Activated B cell treated with CpG ODN at 0.5 μM for 24 hours (primary cell): ENCODE measurements at regions of chr2 and their contacts with region 1.

Region 1: GRCh38 chr2:64865073-64865830 is 123.9 kb upstream of the SLC1A4 start:
- DNase-seq: peak; percentile 76
- ATAC-seq: peak; percentile 56
- H3K4me3 Mint-ChIP-seq: peak overlapping the region; percentile 41
- H3K27ac Mint-ChIP-seq: no peak overlapping the region
- H3K4me1 Mint-ChIP-seq: peaks cover 6% of the 10 kb centered on the region
- H3K27me3 Mint-ChIP-seq: no peaks in the 10 kb centered on the region
- CTCF ChIP-seq: no peak

Region 2: GRCh38 chr2:64447317-64448040 is 417.8 kb before region 1 on chr2:
- CTCF ChIA-PET with region 1: no interaction called
- POLR2A ChIA-PET with region 1: no interaction called
- intact Hi-C with region 1: no loop called
- DNase-seq: no peak
- ATAC-seq: no peak
- H3K4me3 Mint-ChIP-seq: no peak overlapping the region
- H3K27ac Mint-ChIP-seq: no peak overlapping the region
- H3K4me1 Mint-ChIP-seq: no peaks in the 10 kb centered on the region
- H3K27me3 Mint-ChIP-seq: peaks cover 2% of the 10 kb centered on the region
- CTCF ChIP-seq: no peak

Region 3: DNA sequence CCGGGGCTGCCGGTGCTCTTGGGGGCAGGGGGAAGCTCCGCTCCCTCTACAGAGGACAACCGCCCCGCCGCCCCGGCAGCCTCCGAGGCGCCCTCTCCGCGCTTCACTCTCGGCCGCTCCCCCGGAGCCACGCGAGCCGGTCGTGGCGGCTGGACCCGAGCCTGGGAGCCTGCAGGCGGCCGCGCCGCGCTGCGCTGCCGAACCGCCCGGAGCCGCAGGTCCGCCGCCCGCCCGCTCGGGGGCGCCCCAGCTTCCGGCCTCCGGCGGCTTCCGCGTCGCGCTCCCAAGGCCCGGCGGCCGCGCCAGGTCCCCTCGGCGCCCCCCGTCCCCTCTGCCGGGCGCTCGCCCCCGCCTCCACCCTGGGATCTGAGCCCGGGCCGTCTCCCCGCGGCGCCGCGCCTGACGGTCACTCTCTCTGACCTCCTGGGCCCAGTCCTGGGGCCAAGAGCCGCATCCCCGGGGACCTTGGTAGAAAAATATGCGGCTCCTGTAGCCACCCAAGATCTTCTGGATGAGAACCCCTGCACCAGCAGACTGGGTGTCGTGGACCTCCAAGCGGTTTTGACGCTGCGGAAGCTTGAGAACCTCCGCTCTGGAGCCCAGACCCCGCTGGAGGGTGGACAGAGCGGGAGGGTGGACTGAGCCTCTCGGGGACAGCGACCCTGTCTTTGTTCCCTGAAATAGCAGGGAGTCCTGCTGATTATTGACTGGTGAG is 255.9 kb before region 1 on chr2:
- CTCF ChIA-PET with region 1: interaction called, 4 read pairs
- POLR2A ChIA-PET with region 1: interaction called, 18 read pairs
- intact Hi-C with region 1: loop called (anchors 1 kb)
- DNase-seq: peak; percentile 82
- ATAC-seq: peak; percentile 71
- H3K4me3 Mint-ChIP-seq: peak overlapping the region; percentile 84
- H3K27ac Mint-ChIP-seq: peak overlapping the region; percentile 77
- H3K4me1 Mint-ChIP-seq: peaks cover 34% of the 10 kb centered on the region
- H3K27me3 Mint-ChIP-seq: no peaks in the 10 kb centered on the region
- CTCF ChIP-seq: no peak

Region 4: DNA sequence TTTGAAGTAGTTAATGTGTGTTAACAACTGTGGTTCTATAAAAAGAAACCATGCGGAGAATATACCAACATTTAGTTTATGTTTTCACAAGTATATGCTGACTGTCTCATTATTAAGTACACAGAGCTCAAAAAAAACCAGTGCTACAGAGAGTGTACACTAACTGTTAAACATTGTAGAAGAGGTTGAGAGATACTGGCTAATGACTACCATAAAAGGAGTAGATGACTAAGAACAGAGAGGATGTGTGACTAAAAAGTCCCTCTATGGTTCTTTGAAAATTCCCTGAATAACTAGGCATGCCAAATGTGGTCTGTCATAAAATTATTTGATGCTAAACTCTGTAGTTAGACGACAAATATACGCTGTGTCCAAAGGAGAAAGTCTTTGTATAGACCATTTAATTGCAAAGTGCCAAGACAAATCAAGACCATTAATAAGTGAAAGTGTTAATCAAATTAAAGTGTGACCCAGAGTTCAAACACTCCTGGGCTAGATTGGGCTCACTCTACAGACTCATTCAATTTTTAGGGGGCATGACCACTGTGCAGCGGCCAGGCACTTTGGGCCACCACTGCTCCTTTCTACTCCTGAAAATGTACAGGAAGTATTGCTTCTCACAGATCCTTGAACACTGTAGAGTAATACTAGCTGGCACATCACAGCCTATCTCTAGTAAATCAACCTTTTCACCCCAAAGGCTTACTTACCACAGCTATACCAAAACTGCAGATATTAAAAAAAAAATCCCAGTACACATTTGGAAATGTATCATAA is 166.4 kb before region 1 on chr2:
- CTCF ChIA-PET with region 1: no interaction called
- POLR2A ChIA-PET with region 1: interaction called, 5 read pairs
- intact Hi-C with region 1: loop called (anchors 1 kb)
- DNase-seq: no peak
- ATAC-seq: peak; percentile 86
- H3K4me3 Mint-ChIP-seq: peak overlapping the region; percentile 52
- H3K27ac Mint-ChIP-seq: peak overlapping the region; percentile 89
- H3K4me1 Mint-ChIP-seq: peaks cover 51% of the 10 kb centered on the region
- H3K27me3 Mint-ChIP-seq: no peaks in the 10 kb centered on the region
- CTCF ChIP-seq: no peak

Region 5: DNA sequence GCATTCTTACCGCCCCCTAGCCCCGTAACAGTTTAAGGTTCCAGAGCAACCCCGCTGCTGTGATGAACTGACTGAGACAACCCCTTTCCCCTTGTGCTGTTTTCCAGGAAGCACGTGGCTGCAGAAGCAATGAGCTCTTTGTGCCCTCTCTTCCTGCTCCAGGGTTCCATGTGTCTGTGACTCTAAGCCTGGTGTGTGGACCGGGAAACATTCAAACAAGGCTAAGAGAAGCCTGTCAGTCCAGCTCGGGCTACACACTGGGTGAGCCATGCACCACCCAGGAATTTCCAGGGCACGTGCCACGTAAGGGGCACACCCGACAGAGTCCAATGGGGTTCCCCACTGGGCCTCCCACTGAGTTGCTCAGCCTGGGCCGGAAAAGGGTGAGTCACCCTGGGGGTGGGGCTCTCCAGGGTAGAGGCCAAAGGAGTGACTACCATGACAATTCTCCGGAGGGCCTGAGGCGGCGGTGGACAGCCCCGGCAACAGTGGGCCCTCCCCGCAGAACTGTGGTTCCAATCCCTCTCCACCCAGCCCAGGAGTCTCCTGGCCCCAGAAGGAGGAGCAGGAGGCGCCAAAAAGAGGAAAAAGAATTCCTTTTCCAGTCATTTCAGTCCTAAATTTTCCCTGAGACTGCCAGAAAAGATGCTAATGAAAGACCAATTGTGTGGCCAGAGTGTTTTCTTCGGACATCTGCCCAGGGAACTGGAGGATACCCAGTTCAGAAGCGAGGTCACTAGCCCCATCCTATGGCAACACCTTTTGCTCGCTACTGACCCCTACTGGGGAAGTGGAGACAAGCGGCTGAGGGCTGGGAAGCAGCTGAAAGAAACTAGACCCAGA is 33.9 kb before region 1 on chr2:
- CTCF ChIA-PET with region 1: interaction called, 15 read pairs
- POLR2A ChIA-PET with region 1: interaction called, 14 read pairs
- intact Hi-C with region 1: loop called (anchors 1 kb)
- DNase-seq: peak; percentile 75
- ATAC-seq: peak; percentile 96
- H3K4me3 Mint-ChIP-seq: peak overlapping the region; percentile 63
- H3K27ac Mint-ChIP-seq: peak overlapping the region; percentile 82
- H3K4me1 Mint-ChIP-seq: peaks cover 21% of the 10 kb centered on the region
- H3K27me3 Mint-ChIP-seq: no peaks in the 10 kb centered on the region
- CTCF ChIP-seq: no peak

Region 6: DNA sequence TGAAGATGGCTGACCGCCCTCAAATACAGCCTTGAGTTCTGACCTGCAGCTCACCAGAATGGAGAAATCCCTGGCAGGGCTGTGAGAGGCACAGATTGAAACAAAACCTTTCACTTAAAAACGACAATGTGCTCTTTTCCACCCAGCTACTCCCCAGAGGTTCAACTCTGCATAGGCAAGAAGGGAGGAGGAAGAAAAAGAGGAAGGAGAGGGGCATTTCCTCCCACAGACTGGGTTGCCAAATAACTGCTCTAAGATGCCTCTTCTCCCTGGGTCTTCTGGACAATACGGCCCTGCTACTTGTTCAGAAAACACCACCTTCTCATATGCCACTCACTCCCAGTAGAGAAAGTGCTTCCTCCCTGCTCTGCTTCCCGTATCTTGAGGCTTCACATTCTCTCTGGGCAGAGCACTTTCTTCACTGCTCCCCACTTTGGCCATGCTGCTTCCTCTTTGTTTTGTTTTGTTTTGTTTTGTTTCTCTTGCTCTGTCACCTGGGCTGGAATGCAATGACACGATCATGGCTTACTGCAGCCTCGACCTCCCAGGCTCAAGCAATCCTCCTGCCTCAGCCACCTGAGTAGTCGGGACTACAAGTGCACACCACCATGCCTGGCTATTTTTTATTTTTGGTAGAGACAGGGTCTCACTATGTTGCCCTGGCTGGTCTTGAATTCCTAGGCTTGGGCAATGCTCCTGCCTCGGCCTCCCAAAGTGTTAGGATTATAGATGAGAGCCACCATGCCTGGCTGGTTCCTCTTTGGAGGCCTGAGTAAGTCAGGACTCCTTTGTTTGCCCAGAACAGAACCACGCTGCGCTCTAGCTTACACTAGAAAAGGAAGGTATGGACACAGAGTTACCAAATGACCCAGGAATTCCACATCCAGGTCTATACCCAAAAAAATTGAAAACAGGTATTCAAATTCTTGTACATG is 12.2 kb before region 1 on chr2:
- CTCF ChIA-PET with region 1: interaction called, 3 read pairs
- POLR2A ChIA-PET with region 1: interaction called, 39 read pairs
- intact Hi-C with region 1: loop called (anchors 1 kb)
- DNase-seq: no peak
- ATAC-seq: peak; percentile 80
- H3K4me3 Mint-ChIP-seq: peak overlapping the region; percentile 45
- H3K27ac Mint-ChIP-seq: peak overlapping the region; percentile 83
- H3K4me1 Mint-ChIP-seq: peaks cover 75% of the 10 kb centered on the region
- H3K27me3 Mint-ChIP-seq: no peaks in the 10 kb centered on the region
- CTCF ChIP-seq: no peak

Region 7: GRCh38 chr2:65142515-65142914 is 277.3 kb after region 1 on chr2:
- CTCF ChIA-PET with region 1: no interaction called
- POLR2A ChIA-PET with region 1: no interaction called
- intact Hi-C with region 1: no loop called
- DNase-seq: no peak
- ATAC-seq: peak; percentile 28
- H3K4me3 Mint-ChIP-seq: no peak overlapping the region
- H3K27ac Mint-ChIP-seq: no peak overlapping the region
- H3K4me1 Mint-ChIP-seq: no peaks in the 10 kb centered on the region
- H3K27me3 Mint-ChIP-seq: peaks cover 11% of the 10 kb centered on the region
- CTCF ChIP-seq: no peak